HEK293 (cell line): ENCODE measurements at regions of chr7 and their contacts with region 1.

Region 1: GRCh38 chr7:38398725-38399321 is 125.4 kb upstream of the TARP start:
- H3K4me3 ChIP-seq: no peak overlapping the region
- H3K27ac ChIP-seq: no peak overlapping the region
- H3K4me1 ChIP-seq: no peaks in the 10 kb centered on the region
- CTCF ChIP-seq: no peak

Region 2: DNA sequence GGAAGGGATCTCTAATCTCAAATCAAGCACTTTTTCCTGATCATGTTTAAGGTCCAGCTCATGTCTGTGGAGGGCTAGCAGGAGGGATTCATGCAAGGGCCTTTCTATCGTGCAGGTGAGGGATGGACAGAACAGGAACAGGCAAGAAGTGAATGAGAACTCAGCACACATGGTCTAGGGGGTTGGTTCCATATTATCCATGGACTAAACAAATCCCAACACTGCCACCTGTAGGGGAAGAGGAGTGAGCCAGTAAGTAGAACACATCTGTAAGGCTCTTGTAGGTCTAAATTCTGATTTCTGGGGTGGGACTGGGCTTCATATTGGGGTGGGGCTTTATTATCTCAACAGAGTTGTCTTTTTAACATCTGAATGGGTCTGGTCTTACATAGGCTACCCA is 12.6 kb after region 1 on chr7:
- CTCF ChIA-PET with region 1: interaction called, 12 read pairs
- POLR2A ChIA-PET with region 1: no interaction called
- H3K4me3 ChIP-seq: no peak overlapping the region
- H3K27ac ChIP-seq: no peak overlapping the region
- H3K4me1 ChIP-seq: no peaks in the 10 kb centered on the region
- CTCF ChIP-seq: no peak

Region 3: DNA sequence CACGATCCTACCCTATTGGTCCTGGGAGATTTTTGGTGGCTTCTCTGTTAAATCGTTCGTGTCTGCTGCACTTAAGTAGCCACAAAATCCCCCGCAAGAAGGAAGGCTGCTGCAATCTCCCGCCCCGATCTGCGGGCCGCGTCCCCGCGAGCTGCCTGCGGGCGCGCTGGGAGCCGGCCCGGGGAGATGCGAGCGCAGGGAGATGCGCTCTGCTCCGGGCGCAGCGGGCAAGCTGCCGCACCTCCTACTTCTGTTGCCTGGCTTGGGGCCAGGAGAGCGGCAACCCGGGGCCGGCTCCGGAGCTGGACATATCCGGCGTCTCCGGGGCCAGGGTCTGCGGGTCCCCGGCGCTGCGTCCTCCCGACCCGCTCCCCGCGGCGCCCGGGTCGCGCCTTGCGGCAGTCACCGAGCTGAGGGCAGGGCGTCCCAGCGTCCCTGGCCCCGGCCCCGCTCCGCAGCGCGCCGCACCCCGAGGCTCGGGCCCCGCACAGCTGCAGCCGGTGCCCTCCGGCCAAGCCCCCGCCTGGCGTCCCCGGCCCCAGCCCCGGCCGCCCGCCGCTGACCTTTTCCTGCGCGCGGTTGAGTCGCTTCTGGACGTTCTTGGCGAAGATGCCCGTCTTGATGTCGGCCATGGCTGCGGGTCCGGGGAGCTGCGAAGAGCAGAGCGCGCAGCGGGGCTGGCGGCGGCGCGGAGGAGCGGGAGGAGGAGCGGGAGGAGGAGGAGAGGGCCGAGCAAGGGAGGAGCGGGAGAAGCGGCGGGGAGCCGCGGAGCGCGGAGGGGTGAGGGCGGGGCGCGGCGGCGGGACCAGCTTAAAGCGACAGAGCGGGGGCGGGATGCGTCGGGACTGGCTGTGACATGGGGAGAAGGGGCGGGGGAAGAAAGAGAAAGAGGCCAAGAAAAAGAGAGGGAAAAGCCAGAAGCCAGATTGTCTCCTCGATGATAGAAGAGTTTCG is 232.2 kb after region 1 on chr7 and contains the start of gene AMPH:
- CTCF ChIA-PET with region 1: interaction called, 13 read pairs
- POLR2A ChIA-PET with region 1: no interaction called
- H3K4me3 ChIP-seq: peak within 1 kb of the TSS; percentile 68
- H3K27ac ChIP-seq: peak within 1 kb of the TSS; percentile 41; the same call in 1 of the 2 replicates
- H3K4me1 ChIP-seq: peaks cover 4% of the 10 kb centered on the region
- CTCF ChIP-seq: no peak

Region 4: GRCh38 chr7:38660427-38661099 is 261.7 kb after region 1 on chr7:
- CTCF ChIA-PET with region 1: interaction called, 24 read pairs
- POLR2A ChIA-PET with region 1: no interaction called
- H3K4me3 ChIP-seq: no peak overlapping the region
- H3K27ac ChIP-seq: no peak overlapping the region
- H3K4me1 ChIP-seq: no peaks in the 10 kb centered on the region; the same call in 1 of the 2 replicates
- CTCF ChIP-seq: no peak; the same call in 1 of the 2 replicates